CD8-positive, alpha-beta T cell (primary cell): ENCODE measurements at regions of chr2 and their contacts with region 1.

Region 1: GRCh38 chr2:73233154-73233931 is at the start of gene PRADC1:
- DNase-seq: peak; percentile 85 to 97 (median 94)
- ATAC-seq: peak; percentile 77
- H3K4me3 ChIP-seq: peak within 1 kb of the TSS; percentile 80 to 98
- H3K4me3 Mint-ChIP-seq: peak within 1 kb of the TSS; percentile 97
- H3K27ac ChIP-seq: peak within 1 kb of the TSS; percentile 82 to 89
- H3K27ac Mint-ChIP-seq: peak within 1 kb of the TSS; percentile 97
- H3K4me1 ChIP-seq: peaks cover 23% of the 10 kb centered on the region
- H3K4me1 Mint-ChIP-seq: peaks cover 43% of the 10 kb centered on the region
- H3K27me3 ChIP-seq: no peaks in the 10 kb centered on the region
- H3K27me3 Mint-ChIP-seq: no peaks in the 10 kb centered on the region
- CTCF ChIP-seq: no peak
- total RNA-seq, gene PRADC1: 2.4 to 3.4 TPM

Region 2: DNA sequence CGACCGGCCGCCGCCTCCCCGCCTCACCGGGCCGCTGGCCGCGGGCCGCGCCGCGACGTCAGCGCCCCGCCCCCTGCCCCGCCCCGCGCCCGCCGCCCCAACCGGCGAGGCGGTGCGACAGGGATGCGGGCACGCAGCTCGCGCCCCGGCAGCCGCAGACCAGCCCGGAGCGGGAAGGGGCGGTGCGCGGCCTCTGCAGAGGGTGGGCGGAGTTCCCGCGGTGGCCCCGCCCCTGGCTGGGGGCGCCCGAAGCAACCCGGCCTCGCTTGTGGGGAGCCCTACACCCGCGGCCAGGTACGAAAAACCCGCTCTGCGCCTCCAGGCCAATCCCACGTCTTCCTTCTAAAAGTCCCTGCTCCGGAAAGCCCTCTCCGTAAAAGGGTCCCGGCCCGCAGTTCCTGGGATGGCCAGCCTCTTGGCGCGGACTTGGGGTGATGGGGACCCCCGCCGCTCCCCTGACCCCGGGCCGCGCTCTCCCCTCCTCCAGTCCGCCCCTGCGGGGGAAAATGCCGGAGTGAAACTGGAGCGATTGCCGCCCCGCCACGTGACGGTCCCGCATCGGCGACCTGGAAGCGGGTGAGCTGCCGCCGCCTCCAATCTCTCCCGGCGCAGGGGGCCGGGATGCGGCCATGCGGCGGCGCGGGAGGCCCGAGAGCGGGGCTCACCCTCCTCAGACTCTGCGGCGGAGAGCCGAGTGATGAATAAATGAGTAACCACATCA is 120.3 kb before region 1 on chr2 and contains the start of gene RAB11FIP5:
- CTCF ChIA-PET with region 1: no interaction called
- POLR2A ChIA-PET with region 1: interaction called, 4 read pairs
- intact Hi-C with region 1: loop called in 1 of 2 experiments (anchors 1 kb)
- DNase-seq: peak; percentile 43 to 90 (median 73)
- ATAC-seq: peak; percentile 90
- H3K4me3 ChIP-seq: peak within 1 kb of the TSS; percentile 68 to 70
- H3K4me3 Mint-ChIP-seq: peak within 1 kb of the TSS; percentile 82
- H3K27ac ChIP-seq: peak within 1 kb of the TSS; percentile 32 to 37
- H3K27ac Mint-ChIP-seq: no peak within 1 kb of the TSS
- H3K4me1 ChIP-seq: peaks cover 15% of the 10 kb centered on the region
- H3K4me1 Mint-ChIP-seq: peaks cover 18% of the 10 kb centered on the region
- H3K27me3 ChIP-seq: peaks cover 0 to 3% of the 10 kb centered on the region in 2 experiments
- H3K27me3 Mint-ChIP-seq: no peaks in the 10 kb centered on the region
- CTCF ChIP-seq: no peak
- total RNA-seq, gene RAB11FIP5: 4.7 to 10.7 TPM

Region 3: GRCh38 chr2:73218298-73218697 is 15.0 kb before region 1 on chr2:
- CTCF ChIA-PET with region 1: interaction called, 15 read pairs
- POLR2A ChIA-PET with region 1: interaction called, 25 read pairs
- intact Hi-C with region 1: loop called (anchors 1 kb)
- DNase-seq: no peak
- ATAC-seq: no peak
- H3K4me3 ChIP-seq: no peak overlapping the region
- H3K4me3 Mint-ChIP-seq: no peak overlapping the region
- H3K27ac ChIP-seq: no peak overlapping the region
- H3K27ac Mint-ChIP-seq: no peak overlapping the region
- H3K4me1 ChIP-seq: peaks cover 18% of the 10 kb centered on the region
- H3K4me1 Mint-ChIP-seq: peaks cover 27% of the 10 kb centered on the region
- H3K27me3 ChIP-seq: no peaks in the 10 kb centered on the region
- H3K27me3 Mint-ChIP-seq: no peaks in the 10 kb centered on the region
- CTCF ChIP-seq: no peak

Region 4: DNA sequence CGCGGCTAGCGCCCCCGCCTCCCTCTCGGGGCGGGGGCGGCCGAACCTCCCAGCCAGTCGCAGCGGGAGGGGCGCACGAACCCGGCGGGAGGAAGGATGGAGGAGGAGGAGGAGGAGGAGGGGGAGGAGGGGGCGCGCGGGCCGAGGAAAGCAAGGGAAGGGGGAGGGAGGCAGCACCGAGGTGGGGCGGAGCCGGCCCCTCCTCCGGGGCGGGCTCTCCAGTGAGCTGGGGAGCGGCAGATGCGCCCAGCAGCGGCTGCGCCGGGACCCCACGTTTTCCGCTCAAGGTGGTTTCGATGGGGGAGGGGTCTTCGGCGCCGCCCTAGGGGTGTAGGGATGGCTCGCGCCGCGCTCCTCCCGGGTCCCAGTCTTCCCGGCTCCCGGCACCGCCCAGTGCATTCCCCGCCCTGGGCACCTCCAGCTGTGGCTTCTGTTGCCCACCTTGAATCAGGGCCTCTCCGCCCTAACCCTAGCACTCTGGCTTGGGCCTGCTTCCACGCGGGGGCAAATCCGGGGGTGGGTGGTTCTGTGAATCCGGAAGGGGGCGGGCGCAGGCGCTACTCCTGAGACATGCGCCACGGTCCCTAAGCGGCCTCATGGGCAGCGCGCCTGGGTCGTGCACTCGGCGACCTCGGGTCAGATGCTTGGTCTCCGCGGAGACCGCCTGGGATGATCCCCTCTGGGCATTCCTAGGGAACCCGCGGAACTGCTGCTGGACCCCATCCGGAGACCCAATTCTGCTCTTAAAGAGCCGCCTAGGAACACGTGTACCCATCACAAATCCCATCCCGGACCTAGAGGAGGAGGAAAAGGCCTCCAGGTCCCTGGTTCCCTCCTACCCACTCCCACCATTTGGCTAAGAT is 51.2 kb after region 1 on chr2 and contains the start of gene FBXO41:
- CTCF ChIA-PET with region 1: interaction called, 12 read pairs
- POLR2A ChIA-PET with region 1: interaction called, 16 read pairs
- intact Hi-C with region 1: loop called (anchors 1 to 2 kb)
- DNase-seq: peak; percentile 26 to 87 (median 68)
- ATAC-seq: peak; percentile 84
- H3K4me3 ChIP-seq: peak within 1 kb of the TSS; percentile 77 to 81
- H3K4me3 Mint-ChIP-seq: peak within 1 kb of the TSS; percentile 91
- H3K27ac ChIP-seq: peak within 1 kb of the TSS; percentile 61 to 74
- H3K27ac Mint-ChIP-seq: peak within 1 kb of the TSS; percentile 75
- H3K4me1 ChIP-seq: peaks cover 20% of the 10 kb centered on the region
- H3K4me1 Mint-ChIP-seq: peaks cover 24% of the 10 kb centered on the region
- H3K27me3 ChIP-seq: no peaks in the 10 kb centered on the region
- H3K27me3 Mint-ChIP-seq: peaks cover 8% of the 10 kb centered on the region
- CTCF ChIP-seq: no peak
- total RNA-seq, gene FBXO41: 22.1 to 23.6 TPM

Region 5: DNA sequence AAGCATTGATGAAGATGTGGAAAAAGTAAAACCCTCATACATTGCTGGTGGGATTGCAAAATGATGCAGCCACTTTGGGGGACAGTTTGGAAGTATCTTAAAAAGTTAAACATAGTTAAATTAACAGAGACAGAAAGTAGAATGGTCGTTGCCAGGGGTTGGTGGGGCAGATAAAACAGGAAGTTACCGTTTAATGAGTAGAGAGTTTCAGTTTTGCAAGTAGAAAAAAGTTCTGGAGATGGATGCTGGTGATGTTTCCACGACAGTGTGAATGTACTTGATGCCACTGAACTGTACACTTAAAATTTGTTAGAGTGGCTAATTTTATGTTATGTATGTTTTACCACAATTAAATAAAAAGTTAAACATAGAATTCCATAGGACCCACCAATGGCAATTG is 104.5 kb after region 1 on chr2:
- CTCF ChIA-PET with region 1: no interaction called
- POLR2A ChIA-PET with region 1: no interaction called
- intact Hi-C with region 1: no loop called
- DNase-seq: no peak
- ATAC-seq: no peak
- H3K4me3 ChIP-seq: no peak overlapping the region
- H3K4me3 Mint-ChIP-seq: no peak overlapping the region
- H3K27ac ChIP-seq: no peak overlapping the region
- H3K27ac Mint-ChIP-seq: no peak overlapping the region
- H3K4me1 ChIP-seq: no peaks in the 10 kb centered on the region
- H3K4me1 Mint-ChIP-seq: peaks cover 3% of the 10 kb centered on the region
- H3K27me3 ChIP-seq: no peaks in the 10 kb centered on the region
- H3K27me3 Mint-ChIP-seq: no peaks in the 10 kb centered on the region
- CTCF ChIP-seq: no peak

Region 6: GRCh38 chr2:73926493-73927338 is 693.4 kb after region 1 on chr2 and contains the start of gene DGUOK:
- CTCF ChIA-PET with region 1: no interaction called
- POLR2A ChIA-PET with region 1: no interaction called
- intact Hi-C with region 1: loop called in 1 of 2 experiments (anchors 10 kb)
- DNase-seq: peak; percentile 90 to 100 (median 96)
- ATAC-seq: peak; percentile 96
- H3K4me3 ChIP-seq: peak within 1 kb of the TSS; percentile 70 to 72
- H3K4me3 Mint-ChIP-seq: peak within 1 kb of the TSS; percentile 88
- H3K27ac ChIP-seq: peak within 1 kb of the TSS; percentile 94
- H3K27ac Mint-ChIP-seq: peak within 1 kb of the TSS; percentile 99
- H3K4me1 ChIP-seq: peaks cover 45% of the 10 kb centered on the region
- H3K4me1 Mint-ChIP-seq: peaks cover 52% of the 10 kb centered on the region
- H3K27me3 ChIP-seq: no peaks in the 10 kb centered on the region
- H3K27me3 Mint-ChIP-seq: no peaks in the 10 kb centered on the region
- CTCF ChIP-seq: no peak
- total RNA-seq, gene DGUOK: 29.0 to 31.8 TPM

Region 7: DNA sequence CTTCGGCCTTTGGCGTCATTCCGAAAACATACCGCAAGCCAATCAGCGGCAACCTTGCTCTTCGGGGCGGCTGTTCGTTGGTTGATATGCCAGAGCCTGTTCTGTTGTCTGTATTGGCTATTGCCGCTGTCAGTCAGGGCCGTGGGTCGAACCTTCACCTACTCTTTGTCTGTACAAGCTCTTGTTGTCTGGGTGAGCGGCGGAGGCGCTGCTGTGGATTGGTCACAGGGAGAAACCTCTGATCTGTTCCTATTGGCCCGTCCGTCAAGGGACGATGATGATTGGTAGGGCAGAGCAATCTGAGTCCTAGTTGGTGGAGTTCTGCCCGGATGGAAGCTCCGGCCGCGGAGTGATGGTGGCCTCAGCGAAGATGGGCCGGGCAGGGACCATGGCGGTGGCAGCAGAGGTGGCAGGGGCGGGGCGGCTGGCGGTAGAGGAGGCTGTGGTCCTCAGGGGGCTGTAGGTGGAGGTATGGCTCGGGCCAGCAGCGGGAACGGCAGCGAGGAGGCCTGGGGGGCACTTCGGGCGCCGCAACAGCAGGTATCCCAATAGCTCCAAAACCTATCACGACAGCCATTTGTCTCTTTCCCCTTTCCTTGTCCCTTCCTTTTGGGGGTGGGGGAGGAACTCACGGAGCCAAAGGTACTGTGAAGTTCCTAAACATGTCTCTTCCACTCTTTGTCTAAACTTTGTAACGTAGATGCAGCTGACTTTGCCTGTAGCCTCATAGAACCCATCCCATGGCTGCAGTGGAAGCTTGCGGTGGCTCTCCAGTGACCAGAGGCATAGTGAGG is 1225.0 kb after region 1 on chr2 and contains the start of gene WBP1:
- CTCF ChIA-PET with region 1: no interaction called
- POLR2A ChIA-PET with region 1: no interaction called
- intact Hi-C with region 1: loop called (anchors 2 to 5 kb)
- DNase-seq: peak; percentile 96 to 100 (median 98)
- ATAC-seq: peak; percentile 77
- H3K4me3 ChIP-seq: peak within 1 kb of the TSS; percentile 84 to 95
- H3K4me3 Mint-ChIP-seq: peak within 1 kb of the TSS; percentile 97
- H3K27ac ChIP-seq: peak within 1 kb of the TSS; percentile 93 to 100
- H3K27ac Mint-ChIP-seq: peak within 1 kb of the TSS; percentile 99
- H3K4me1 ChIP-seq: peaks cover 34% of the 10 kb centered on the region
- H3K4me1 Mint-ChIP-seq: peaks cover 57% of the 10 kb centered on the region
- H3K27me3 ChIP-seq: no peaks in the 10 kb centered on the region
- H3K27me3 Mint-ChIP-seq: no peaks in the 10 kb centered on the region
- CTCF ChIP-seq: no peak
- total RNA-seq, gene WBP1: 68.5 to 70.6 TPM